ENCODE measurements at regions of chr1 and their contacts with region 1.

Region 1: DNA sequence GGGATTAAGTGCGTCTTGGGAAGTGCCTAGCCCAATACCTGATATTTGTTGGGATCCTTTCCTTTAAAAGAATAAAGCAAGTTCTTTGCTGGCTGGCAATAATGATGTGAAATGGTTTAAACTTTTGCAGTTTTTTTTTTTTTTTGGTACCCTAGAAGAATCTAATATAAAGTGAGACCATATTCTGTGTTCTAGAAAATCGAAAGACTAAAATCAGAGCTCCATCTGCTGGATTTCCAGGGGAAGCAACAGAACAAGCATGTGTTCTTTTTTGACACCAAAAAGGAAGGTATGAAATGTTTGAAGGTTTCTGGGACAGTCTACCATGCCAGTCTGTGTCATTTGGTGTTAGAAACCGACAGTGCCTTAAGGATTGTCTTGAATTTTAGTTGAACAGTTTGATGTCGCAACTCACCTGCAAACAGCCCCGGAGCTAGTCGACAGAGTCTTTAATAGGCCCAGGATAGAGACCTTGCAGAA is 6.4 kb downstream of the UTP11 start:
- DNase-seq: no peak
- H3K4me3 Mint-ChIP-seq: no peak overlapping the region
- H3K27ac Mint-ChIP-seq: no peak overlapping the region
- H3K4me1 Mint-ChIP-seq: peaks cover 5% of the 10 kb centered on the region
- H3K27me3 Mint-ChIP-seq: no peaks in the 10 kb centered on the region
- CTCF ChIP-seq: peak; percentile 57

Region 2: DNA sequence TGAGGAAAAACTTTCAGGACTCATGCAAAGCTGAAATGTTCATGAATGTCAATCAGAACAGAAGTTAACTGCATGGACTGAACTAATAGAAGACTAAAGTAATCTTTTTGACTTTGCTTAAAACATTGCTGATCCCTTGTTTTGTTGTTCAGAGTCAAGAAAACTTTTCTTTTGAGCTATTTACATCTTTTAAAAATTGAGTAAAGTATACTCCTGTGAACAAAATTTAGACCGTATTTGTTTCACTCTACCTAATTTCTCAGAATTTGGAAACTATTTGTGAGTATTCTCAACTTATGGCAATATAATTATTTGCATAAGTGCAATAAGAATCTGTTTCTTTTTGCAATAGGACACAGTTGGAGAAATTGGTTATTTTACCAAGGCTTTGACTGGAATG is 113.2 kb before region 1 on chr1:
- CTCF ChIA-PET with region 1: no interaction called
- intact Hi-C with region 1: no loop called
- DNase-seq: no peak
- H3K4me3 Mint-ChIP-seq: no peak overlapping the region
- H3K27ac Mint-ChIP-seq: no peak overlapping the region
- H3K4me1 Mint-ChIP-seq: peaks cover 10% of the 10 kb centered on the region
- H3K27me3 Mint-ChIP-seq: no peaks in the 10 kb centered on the region
- CTCF ChIP-seq: no peak

Region 3: DNA sequence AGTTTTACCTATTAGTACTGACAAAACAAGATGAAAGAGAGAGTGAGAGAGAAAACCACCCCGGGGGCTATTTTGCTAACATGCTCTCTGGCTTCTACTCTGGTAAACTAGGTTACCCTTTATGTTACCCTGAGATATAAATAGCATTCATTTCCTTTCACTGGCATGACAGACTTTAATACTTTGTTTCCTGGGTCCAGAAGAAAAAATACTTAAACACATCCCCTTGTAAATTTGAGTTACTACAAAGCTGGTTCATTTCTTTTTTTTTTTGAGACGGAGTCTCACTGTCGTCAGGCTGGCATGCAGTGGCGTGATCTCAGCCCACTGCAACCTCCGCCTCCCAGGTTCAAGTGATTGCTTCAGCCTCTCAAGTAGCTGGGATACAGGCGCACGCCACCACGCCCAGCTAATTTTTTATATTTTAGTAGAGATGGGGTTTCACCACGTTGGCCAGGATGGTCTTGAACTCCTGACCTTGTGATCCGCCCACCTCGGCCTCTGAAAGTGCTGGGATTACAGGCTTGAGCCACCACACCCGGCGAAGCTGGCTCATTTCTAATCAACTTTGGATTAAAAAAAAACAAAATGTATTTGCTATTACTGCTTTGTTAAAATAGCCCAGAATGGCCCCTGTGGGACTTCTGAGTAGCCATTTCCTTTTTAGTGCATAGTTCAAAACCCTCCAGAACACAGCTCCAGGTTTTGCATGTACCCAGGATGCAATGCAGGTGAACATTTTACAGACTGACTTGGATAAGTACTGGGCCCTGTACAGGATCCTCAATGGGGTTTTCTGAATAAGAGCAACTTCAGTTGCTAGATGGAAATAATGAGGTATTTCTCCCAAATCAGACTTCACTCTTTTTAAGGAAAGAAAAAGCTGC is 92.6 kb before region 1 on chr1:
- CTCF ChIA-PET with region 1: no interaction called
- intact Hi-C with region 1: no loop called
- DNase-seq: no peak
- H3K4me3 Mint-ChIP-seq: no peak overlapping the region
- H3K27ac Mint-ChIP-seq: peak overlapping the region; percentile 6
- H3K4me1 Mint-ChIP-seq: peaks cover 31% of the 10 kb centered on the region
- H3K27me3 Mint-ChIP-seq: no peaks in the 10 kb centered on the region
- CTCF ChIP-seq: no peak

Region 4: DNA sequence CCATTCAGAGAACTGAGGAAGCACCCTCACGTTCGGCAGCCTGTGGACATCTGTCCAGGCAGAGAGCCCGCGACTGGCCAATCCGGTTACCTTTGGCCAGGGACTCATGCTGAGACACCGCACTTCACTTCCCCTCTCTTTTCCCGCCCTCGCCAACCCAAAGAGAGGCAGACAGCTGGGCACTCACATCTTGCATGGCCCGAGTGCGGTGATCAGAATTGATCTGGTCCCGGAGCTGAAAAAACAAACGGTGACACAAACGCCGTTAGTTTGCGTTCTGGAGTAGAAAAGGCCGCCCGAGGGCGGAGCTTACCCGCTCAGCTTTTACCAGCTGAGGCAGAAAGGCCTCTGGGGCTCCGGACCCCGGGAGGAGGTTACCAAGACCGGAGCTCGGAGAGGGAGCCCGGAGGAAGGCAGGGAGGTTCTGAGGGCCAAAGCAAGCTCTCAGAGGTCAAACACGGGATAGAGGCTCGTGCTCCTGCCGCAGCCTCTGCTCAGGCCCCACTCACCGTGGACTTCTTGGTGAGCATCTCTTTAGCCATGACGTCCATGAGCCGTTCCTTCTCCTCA is 29.5 kb before region 1 on chr1:
- CTCF ChIA-PET with region 1: interaction called, 4 read pairs
- intact Hi-C with region 1: loop called (anchors 1 kb)
- DNase-seq: peak; percentile 41
- H3K4me3 Mint-ChIP-seq: peak overlapping the region; percentile 76
- H3K27ac Mint-ChIP-seq: peak overlapping the region; percentile 65
- H3K4me1 Mint-ChIP-seq: peaks cover 16% of the 10 kb centered on the region
- H3K27me3 Mint-ChIP-seq: no peaks in the 10 kb centered on the region
- CTCF ChIP-seq: no peak

Region 5: DNA sequence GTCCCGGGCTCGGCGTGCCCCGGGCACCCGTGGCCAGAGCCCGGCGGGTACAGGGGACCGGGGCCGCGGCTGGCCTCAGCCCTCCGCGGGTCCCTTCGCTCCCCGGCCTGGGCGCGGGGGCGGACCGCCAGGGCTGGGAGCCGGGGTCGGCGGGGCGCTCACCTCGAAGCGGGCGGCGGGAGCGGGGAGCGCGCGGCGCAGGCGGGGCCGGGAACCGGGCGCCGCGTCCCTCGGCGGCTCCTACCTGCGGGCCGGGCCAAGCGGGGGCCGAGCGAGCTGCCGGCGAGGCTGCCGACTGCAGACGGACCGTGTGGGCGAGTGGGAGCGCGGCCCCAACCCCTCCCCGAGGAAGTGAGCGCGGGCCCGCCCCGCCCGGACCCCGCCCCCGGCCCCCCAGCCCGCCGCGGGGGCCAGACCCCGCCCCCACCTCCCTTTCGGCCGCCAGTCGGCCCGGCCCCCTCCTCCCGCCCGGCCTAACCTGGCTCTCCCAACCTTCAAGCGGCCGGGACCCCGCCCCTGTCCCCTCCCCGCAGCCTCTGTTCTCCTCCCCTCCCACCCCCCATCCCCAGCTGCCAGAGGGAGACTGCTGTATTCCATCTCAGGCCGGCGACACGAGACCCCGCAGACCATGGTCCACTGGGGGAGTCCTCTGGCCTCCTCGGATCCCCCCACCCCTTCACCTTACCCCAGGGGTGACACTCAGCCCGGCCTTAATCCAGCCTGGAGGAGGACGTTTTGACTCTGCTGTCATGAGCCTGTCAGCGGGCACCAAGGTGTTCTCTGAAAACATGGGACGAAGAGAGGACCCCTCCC is 13.5 kb before region 1 on chr1 and contains the start of gene FHL3:
- CTCF ChIA-PET with region 1: interaction called, 3 read pairs
- intact Hi-C with region 1: loop called (anchors 2 kb)
- DNase-seq: peak; percentile 68
- H3K4me3 Mint-ChIP-seq: peak within 1 kb of the TSS; percentile 94
- H3K27ac Mint-ChIP-seq: peak within 1 kb of the TSS; percentile 76
- H3K4me1 Mint-ChIP-seq: peaks cover 21% of the 10 kb centered on the region
- H3K27me3 Mint-ChIP-seq: no peaks in the 10 kb centered on the region
- CTCF ChIP-seq: no peak
- total RNA-seq, gene FHL3: 16.9 and 20.4 TPM in 2 replicates